A673 (cell line): ENCODE measurements at regions of chr3 and their contacts with region 1.

Region 1: GRCh38 chr3:16550676-16551341 is 37.3 kb upstream of the RFTN1 start:
- DNase-seq: peak; percentile 89
- H3K4me3 ChIP-seq: no peak overlapping the region
- H3K27ac ChIP-seq: peak overlapping the region; percentile 16
- H3K4me1 ChIP-seq: peaks cover 5% of the 10 kb centered on the region
- H3K27me3 ChIP-seq: no peaks in the 10 kb centered on the region
- CTCF ChIP-seq: peak; percentile 90

Region 2: DNA sequence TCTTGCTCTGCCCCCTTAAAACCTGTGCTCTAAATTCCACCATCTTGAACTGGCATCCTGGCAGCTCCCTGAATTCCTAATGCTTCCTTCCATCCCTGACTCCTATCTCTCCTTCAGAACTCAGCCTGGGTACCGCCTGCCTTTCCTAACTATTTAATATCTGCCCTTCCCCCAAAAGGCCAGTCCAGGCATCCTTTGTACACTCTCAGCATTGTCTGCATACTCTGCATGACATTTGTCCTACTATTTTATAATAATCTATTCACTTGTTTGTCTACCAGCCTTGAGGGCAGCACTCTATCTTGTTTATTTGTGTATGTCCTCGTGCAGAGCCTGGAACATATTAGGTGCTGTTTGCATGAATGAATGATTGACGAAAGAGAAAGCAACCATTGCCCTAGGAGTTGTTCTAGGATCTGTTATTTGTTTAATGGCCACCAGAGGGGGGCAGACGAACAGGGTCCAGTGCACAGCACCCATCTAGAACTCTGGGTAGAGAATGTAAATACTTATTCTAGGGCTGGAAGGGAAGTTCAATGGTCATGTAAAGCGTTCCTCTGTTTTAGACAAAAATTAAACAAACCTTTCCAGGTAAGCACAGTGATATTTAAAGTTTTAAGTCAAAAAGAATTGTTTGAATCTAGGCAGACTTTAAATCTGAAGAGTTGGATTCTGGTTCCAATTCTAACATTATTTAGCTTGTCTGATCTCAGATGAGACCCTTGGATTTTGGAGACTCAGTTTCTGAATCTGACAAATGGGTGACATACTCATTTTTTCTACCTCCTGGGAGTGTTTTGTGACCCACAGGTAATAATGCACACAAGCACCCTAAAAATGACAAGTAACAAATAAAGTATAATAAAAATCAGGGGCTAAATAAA is 502.1 kb before region 1 on chr3:
- CTCF ChIA-PET with region 1: no interaction called
- POLR2A ChIA-PET with region 1: no interaction called
- intact Hi-C with region 1: loop called (anchors 2 kb)
- DNase-seq: peak; percentile 75
- H3K4me3 ChIP-seq: peak overlapping the region; percentile 22
- H3K27ac ChIP-seq: no peak overlapping the region
- H3K4me1 ChIP-seq: no peaks in the 10 kb centered on the region
- H3K27me3 ChIP-seq: no peaks in the 10 kb centered on the region
- CTCF ChIP-seq: peak; percentile 80

Region 3: GRCh38 chr3:16264708-16265454 is 285.9 kb before region 1 on chr3 and contains the starts of genes DPH3 and OXNAD1:
- CTCF ChIA-PET with region 1: interaction called, 14 read pairs
- POLR2A ChIA-PET with region 1: no interaction called
- intact Hi-C with region 1: loop called (anchors 1 kb)
- DNase-seq: peak; percentile 99
- H3K4me3 ChIP-seq: peak within 1 kb of the TSS; percentile 85
- H3K27ac ChIP-seq: peak within 1 kb of the TSS; percentile 89
- H3K4me1 ChIP-seq: peaks cover 12% of the 10 kb centered on the region
- H3K27me3 ChIP-seq: no peaks in the 10 kb centered on the region
- CTCF ChIP-seq: no peak
- total RNA-seq, gene DPH3: 24.0 and 26.4 TPM in 2 replicates
- total RNA-seq, gene OXNAD1: 19.8 and 21.5 TPM in 2 replicates

Region 4: DNA sequence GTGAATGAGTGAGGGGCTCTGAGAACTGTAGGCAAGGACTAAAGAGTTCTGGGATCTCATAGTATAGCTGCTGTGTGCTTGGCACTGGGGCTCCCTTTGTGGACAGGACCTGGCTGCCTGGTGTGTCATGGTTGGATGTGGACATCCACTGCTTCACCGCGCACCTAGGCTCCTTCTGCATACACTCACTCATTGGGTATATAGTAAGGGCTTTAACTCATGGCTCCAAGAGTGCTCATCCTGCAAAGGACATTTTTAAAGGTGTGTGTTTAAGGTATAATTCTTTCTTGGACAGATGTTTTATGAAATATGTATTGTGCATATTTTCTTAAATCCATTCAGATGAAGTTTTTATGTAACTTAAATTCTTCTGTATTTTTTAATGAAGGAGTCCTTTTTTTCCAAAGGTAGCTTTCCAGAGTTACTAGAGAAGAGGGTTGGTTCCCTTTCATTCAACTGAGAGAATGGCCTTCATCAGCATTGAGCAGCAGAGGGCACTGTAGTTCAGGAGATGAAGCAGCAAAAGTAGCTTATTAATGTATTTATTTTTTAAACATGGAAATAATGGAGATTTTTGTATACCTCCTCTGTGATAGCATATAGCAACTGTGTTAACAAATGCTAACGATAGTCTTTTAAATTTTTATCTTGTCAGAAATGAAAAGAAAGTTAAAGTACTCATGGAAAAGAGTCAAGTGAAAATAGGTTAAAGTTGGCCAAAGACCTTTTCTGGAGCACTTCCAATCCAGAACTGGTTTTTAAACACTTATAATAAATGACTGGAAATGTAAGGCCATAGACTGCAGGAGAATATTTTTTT is 260.6 kb before region 1 on chr3:
- CTCF ChIA-PET with region 1: interaction called, 19 read pairs
- POLR2A ChIA-PET with region 1: no interaction called
- intact Hi-C with region 1: loop called (anchors 1 kb)
- DNase-seq: peak; percentile 55
- H3K4me3 ChIP-seq: no peak overlapping the region
- H3K27ac ChIP-seq: no peak overlapping the region
- H3K4me1 ChIP-seq: no peaks in the 10 kb centered on the region
- H3K27me3 ChIP-seq: no peaks in the 10 kb centered on the region
- CTCF ChIP-seq: peak; percentile 89

Region 5: DNA sequence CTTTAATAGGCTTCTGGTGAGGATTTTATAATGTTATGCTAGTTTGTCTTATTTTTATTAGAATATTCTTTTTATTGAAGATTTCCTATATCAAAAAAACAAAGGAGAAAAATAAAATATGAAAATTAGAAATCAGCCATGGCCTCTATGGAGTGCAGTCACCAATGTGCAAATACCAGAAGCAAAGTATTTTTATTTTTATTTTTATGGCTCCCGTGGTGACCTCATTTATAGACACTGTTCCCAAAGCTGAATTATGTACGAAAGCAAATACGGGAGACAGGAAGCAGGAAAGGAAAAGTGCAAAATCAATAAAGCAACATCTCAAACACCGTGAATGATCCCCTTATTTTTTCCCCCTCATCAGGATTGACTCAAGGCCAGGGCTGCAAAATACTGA is 19.3 kb after region 1 on chr3:
- CTCF ChIA-PET with region 1: no interaction called
- POLR2A ChIA-PET with region 1: no interaction called
- intact Hi-C with region 1: no loop called
- DNase-seq: no peak
- H3K4me3 ChIP-seq: no peak overlapping the region
- H3K27ac ChIP-seq: no peak overlapping the region
- H3K4me1 ChIP-seq: no peaks in the 10 kb centered on the region
- H3K27me3 ChIP-seq: peaks cover 10% of the 10 kb centered on the region
- CTCF ChIP-seq: no peak

Region 6: GRCh38 chr3:16720367-16720940 is 169.6 kb after region 1 on chr3:
- CTCF ChIA-PET with region 1: no interaction called
- POLR2A ChIA-PET with region 1: no interaction called
- intact Hi-C with region 1: no loop called
- DNase-seq: peak; percentile 82
- H3K4me3 ChIP-seq: no peak overlapping the region
- H3K27ac ChIP-seq: no peak overlapping the region
- H3K4me1 ChIP-seq: no peaks in the 10 kb centered on the region
- H3K27me3 ChIP-seq: no peaks in the 10 kb centered on the region
- CTCF ChIP-seq: no peak